ENCODE measurements at regions of chr6 and their contacts with region 1.

Region 1: GRCh38 chr6:42175860-42176259 is 2.7 kb downstream of the GUCA1A start:
- DNase-seq: no peak
- H3K4me3 ChIP-seq: no peak overlapping the region
- H3K27ac ChIP-seq: no peak overlapping the region
- H3K4me1 ChIP-seq: peaks cover 3 to 15% (median 9%) of the 10 kb centered on the region in 4 experiments
- H3K27me3 ChIP-seq: no peaks in the 10 kb centered on the region; a peak in 2 of 7 replicates
- CTCF ChIP-seq: peak; percentile 34 to 69 (median 61)
- EP300 ChIP-seq: no peak
- POLR2A ChIP-seq: no peak
- RAD21 ChIP-seq: peak; percentile 70

Region 2: DNA sequence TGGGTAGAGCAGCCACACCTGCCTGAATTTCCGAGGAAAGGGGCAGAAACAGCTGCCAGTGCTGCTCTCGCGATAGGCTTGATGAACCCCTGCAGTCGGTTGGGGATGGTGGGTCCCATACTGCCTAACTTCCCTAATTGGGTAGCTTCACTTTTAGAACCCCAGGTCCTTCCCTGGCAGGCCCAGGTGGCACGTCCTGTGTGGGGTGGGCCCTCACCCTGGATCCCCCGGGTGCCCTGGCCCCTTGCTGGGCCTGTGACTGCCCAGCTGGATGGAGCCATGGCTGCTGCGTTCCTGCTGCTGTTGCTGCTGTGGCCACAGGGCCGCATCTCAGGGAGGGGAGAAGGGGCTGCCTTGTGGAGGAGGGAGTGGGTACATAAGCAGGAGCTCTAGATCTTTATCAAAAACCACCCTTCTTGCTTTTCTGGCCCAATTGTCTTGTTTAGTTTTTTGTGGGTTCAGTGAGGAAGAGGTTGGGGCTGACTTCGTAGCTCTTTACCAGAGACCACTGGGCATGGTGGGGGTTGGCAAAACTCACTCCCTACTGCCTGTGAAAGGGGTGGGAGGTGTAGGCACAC is 928.5 kb before region 1 on chr6:
- CTCF ChIA-PET with region 1: no interaction called
- POLR2A ChIA-PET with region 1: no interaction called
- DNase-seq: no peak
- H3K4me3 ChIP-seq: no peak overlapping the region
- H3K27ac ChIP-seq: no peak overlapping the region
- H3K4me1 ChIP-seq: no peaks in the 10 kb centered on the region
- H3K27me3 ChIP-seq: no peaks in the 10 kb centered on the region
- CTCF ChIP-seq: no peak
- EP300 ChIP-seq: no peak
- POLR2A ChIP-seq: no peak
- RAD21 ChIP-seq: no peak

Region 3: DNA sequence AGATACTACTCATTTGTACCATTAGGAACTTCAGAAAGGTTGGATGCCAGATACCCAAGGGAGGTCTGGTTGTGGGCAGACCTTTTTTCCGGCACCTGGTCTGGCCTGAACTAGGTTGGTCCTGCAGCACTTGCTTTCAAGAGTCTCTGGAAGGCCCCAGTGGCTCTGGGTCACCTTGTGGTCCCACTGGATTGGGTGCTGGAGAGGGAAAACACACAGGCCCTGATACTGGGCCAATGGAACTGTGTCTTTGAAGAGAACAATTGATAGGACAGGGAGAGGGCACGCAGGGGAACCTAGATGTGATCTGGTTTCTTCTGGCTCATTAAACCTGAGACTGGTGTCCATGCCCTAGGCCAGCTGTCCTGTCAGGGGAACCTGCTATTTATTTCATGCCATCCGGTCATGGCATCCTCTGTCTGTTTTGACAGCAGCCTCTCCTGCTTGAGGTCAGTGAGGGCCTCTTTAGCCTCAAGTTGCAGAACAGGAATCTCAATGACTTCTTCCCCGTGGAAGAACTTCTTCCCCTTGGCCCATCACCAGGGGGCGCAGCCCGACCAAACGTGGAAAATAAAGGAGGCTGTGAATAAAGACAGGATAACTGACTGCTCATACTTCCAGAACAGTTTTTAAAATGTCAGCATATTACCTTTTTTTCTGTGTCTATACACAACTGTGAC is 100.6 kb before region 1 on chr6:
- CTCF ChIA-PET with region 1: interaction called, 55 read pairs
- POLR2A ChIA-PET with region 1: interaction called, 3 read pairs
- DNase-seq: peak in 1 of 2 experiments; percentile 90
- H3K4me3 ChIP-seq: no peak overlapping the region
- H3K27ac ChIP-seq: no peak overlapping the region
- H3K4me1 ChIP-seq: no peaks in the 10 kb centered on the region
- H3K27me3 ChIP-seq: no peaks in the 10 kb centered on the region
- CTCF ChIP-seq: peak; percentile 81 to 90 (median 83)
- EP300 ChIP-seq: no peak
- POLR2A ChIP-seq: no peak
- RAD21 ChIP-seq: peak; percentile 88 to 91